ENCODE measurements at regions of chr1 and their contacts with region 1.

Region 1: GRCh38 chr1:244970661-244971551 is 106.6 kb upstream of the HNRNPU start:
- DNase-seq: peak; percentile 91 to 97 (median 93)
- ATAC-seq: peak; percentile 75
- H3K4me3 ChIP-seq: peak overlapping the region; percentile 86
- H3K4me3 Mint-ChIP-seq: peak overlapping the region; percentile 91
- H3K27ac ChIP-seq: peak overlapping the region; percentile 99 to 100
- H3K27ac Mint-ChIP-seq: peak overlapping the region; percentile 100
- H3K4me1 ChIP-seq: peaks cover 6% of the 10 kb centered on the region
- H3K4me1 Mint-ChIP-seq: peaks cover 30% of the 10 kb centered on the region
- H3K27me3 ChIP-seq: no peaks in the 10 kb centered on the region
- H3K27me3 Mint-ChIP-seq: no peaks in the 10 kb centered on the region
- CTCF ChIP-seq: peak; percentile 52

Region 2: DNA sequence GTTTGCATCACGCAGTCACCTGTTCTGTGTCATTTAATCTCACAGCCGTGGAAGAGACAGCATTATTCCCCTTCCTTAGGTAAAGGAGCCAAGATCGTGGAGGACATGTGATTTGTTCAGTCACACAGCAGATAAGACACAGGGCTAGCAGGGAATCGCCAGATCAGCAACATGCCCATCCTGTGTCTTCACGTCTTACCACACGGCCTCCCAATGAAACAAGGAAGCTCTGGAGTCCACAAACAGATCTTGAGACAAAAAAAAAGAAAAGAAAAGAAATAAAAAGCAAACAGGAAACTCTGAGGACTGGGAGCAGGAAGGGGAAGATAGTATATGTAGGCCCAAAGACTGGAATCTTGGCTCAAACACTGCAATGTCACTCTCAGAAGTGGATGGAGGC is 674.5 kb before region 1 on chr1:
- CTCF ChIA-PET with region 1: no interaction called
- POLR2A ChIA-PET with region 1: no interaction called
- intact Hi-C with region 1: loop called in 1 of 2 experiments (anchors 10 kb)
- DNase-seq: no peak
- ATAC-seq: no peak
- H3K4me3 ChIP-seq: no peak overlapping the region
- H3K4me3 Mint-ChIP-seq: no peak overlapping the region
- H3K27ac ChIP-seq: no peak overlapping the region
- H3K27ac Mint-ChIP-seq: no peak overlapping the region
- H3K4me1 ChIP-seq: peaks cover 14% of the 10 kb centered on the region
- H3K4me1 Mint-ChIP-seq: peaks cover 13% of the 10 kb centered on the region
- H3K27me3 ChIP-seq: no peaks in the 10 kb centered on the region
- H3K27me3 Mint-ChIP-seq: no peaks in the 10 kb centered on the region
- CTCF ChIP-seq: no peak

Region 3: DNA sequence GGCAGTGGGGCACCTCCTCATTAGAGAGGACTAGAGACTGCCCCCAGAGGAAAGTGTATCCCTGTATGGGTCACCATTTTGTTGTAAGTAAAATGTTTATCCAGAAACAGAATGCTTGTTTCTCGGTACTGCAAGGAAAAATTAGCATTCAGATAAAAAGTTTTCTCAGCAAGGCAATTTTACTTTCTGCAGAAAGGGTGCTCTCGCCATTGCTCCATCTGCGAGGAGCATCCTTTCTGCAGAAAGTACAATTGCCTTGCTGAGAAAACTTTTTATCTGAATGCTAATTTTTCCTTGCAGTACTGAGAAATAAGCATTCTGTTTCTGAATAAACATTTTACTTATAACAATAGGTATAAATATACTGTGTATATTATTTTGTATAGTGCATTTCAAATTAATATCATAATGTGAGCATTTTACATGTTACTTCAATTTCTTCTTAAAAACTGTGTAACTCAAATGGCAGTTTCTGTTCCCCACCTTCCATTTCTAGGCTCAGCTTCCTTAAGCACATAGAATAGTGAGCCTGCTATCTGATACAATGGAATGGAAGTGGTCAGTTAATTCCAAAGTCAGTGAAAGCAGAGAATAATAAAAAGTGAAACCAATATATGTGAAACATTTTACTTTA is 394.5 kb before region 1 on chr1:
- CTCF ChIA-PET with region 1: no interaction called
- POLR2A ChIA-PET with region 1: no interaction called
- intact Hi-C with region 1: no loop called
- DNase-seq: no peak
- ATAC-seq: no peak
- H3K4me3 ChIP-seq: no peak overlapping the region
- H3K4me3 Mint-ChIP-seq: no peak overlapping the region
- H3K27ac ChIP-seq: no peak overlapping the region
- H3K27ac Mint-ChIP-seq: no peak overlapping the region
- H3K4me1 ChIP-seq: no peaks in the 10 kb centered on the region
- H3K4me1 Mint-ChIP-seq: no peaks in the 10 kb centered on the region
- H3K27me3 ChIP-seq: no peaks in the 10 kb centered on the region
- H3K27me3 Mint-ChIP-seq: no peaks in the 10 kb centered on the region
- CTCF ChIP-seq: no peak

Region 4: GRCh38 chr1:244652699-244653466 is 318.0 kb before region 1 on chr1 and contains the start of gene DESI2:
- CTCF ChIA-PET with region 1: no interaction called
- POLR2A ChIA-PET with region 1: interaction called, 10 read pairs
- intact Hi-C with region 1: loop called (anchors 1 to 10 kb)
- DNase-seq: peak; percentile 95 to 100 (median 97)
- ATAC-seq: peak; percentile 92
- H3K4me3 ChIP-seq: peak within 1 kb of the TSS; percentile 80
- H3K4me3 Mint-ChIP-seq: peak within 1 kb of the TSS; percentile 88
- H3K27ac ChIP-seq: peak within 1 kb of the TSS; percentile 53 to 74
- H3K27ac Mint-ChIP-seq: peak within 1 kb of the TSS; percentile 83
- H3K4me1 ChIP-seq: peaks cover 23% of the 10 kb centered on the region
- H3K4me1 Mint-ChIP-seq: peaks cover 21% of the 10 kb centered on the region
- H3K27me3 ChIP-seq: no peaks in the 10 kb centered on the region
- H3K27me3 Mint-ChIP-seq: no peaks in the 10 kb centered on the region
- CTCF ChIP-seq: peak; percentile 46
- total RNA-seq, gene DESI2: 12.9 to 13.7 TPM

Region 5: DNA sequence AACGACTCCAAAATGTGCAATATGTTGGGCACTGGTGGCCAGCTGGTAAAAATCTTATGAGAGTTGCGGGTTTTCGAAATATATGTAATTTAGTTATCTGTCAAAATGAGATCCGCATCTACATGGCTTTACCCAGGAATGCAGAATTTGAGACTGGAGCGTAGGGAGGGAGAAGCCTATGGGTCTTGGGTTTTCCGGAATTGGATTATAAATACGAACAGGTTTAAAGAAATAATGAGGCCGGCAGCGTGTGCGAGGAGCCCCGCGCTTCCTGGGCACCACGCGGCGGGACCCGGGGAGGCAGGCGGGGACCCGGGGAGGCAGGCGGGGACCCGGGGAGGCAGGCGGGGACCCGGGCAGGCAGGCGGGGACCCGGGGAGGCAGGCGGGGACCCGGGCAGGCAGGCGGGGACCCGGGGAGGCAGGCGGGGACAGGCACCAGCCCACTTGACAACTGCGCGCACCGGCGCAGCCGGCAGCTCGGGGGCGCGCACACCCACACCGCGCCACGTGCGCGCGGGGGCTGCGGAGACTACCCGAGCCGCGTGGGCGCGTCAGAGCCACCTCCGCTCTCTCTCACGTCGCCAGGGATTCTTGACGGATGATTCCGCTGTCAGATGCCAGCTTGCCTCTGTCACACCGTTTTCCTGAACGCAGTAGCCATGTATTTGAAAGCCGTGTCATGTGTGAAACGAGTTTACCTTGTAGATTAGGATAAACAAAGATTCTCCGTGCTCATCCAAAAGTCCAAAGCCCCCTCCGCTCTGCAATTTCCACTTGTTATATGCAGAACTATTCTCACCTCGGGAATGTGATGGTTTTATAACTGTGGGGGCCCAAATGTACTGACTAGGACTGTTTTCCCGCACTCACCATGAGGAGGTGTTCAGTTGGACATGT is 52.2 kb before region 1 on chr1:
- CTCF ChIA-PET with region 1: interaction called, 3 read pairs
- POLR2A ChIA-PET with region 1: interaction called, 23 read pairs
- intact Hi-C with region 1: loop called in 1 of 2 experiments (anchors 2 kb)
- DNase-seq: peak; percentile 22 to 91 (median 66)
- ATAC-seq: peak; percentile 98
- H3K4me3 ChIP-seq: peak overlapping the region; percentile 55
- H3K4me3 Mint-ChIP-seq: peak overlapping the region; percentile 90
- H3K27ac ChIP-seq: no peak overlapping the region
- H3K27ac Mint-ChIP-seq: peak overlapping the region; percentile 56
- H3K4me1 ChIP-seq: peaks cover 7% of the 10 kb centered on the region
- H3K4me1 Mint-ChIP-seq: peaks cover 10% of the 10 kb centered on the region
- H3K27me3 ChIP-seq: no peaks in the 10 kb centered on the region
- H3K27me3 Mint-ChIP-seq: peaks cover 16% of the 10 kb centered on the region
- CTCF ChIP-seq: no peak

Region 6: GRCh38 chr1:246579818-246580217 is 1608.9 kb after region 1 on chr1:
- CTCF ChIA-PET with region 1: no interaction called
- POLR2A ChIA-PET with region 1: no interaction called
- intact Hi-C with region 1: loop called in 1 of 2 experiments (anchors 10 kb)
- DNase-seq: no peak
- ATAC-seq: no peak
- H3K4me3 ChIP-seq: no peak overlapping the region
- H3K4me3 Mint-ChIP-seq: peak overlapping the region; percentile 21
- H3K27ac ChIP-seq: no peak overlapping the region
- H3K27ac Mint-ChIP-seq: peak overlapping the region; percentile 64
- H3K4me1 ChIP-seq: peaks cover 36% of the 10 kb centered on the region
- H3K4me1 Mint-ChIP-seq: peaks cover 92% of the 10 kb centered on the region
- H3K27me3 ChIP-seq: no peaks in the 10 kb centered on the region
- H3K27me3 Mint-ChIP-seq: no peaks in the 10 kb centered on the region
- CTCF ChIP-seq: no peak

Measured in CD4-positive, alpha-beta T cell (primary cell).